Activated B cell treated with CpG ODN at 0.5 μM for 24 hours (primary cell): ENCODE measurements at regions of chr2 and their contacts with region 1.

Region 1: DNA sequence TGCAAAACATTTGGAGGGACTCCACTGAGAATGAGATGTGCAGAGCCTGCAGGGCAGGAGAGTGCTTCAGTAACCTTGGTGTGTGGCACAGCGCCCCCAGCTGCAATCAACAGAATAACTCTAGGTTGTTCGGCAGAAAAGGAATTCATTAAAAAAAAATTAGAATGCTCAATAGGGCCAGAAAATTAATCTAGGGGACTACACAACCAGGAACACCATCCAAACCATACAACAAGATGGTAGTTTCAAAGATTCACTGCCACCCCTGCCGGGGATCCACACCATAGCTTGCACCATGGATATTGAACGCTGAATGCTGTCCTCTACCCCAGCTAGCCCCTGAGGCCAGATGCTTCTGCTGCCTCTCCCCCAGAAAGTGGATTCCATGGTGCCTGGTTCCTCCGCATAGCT is 50.1 kb downstream of the THUMPD2 start:
- DNase-seq: no peak
- ATAC-seq: no peak
- H3K4me3 Mint-ChIP-seq: no peak overlapping the region
- H3K27ac Mint-ChIP-seq: no peak overlapping the region
- H3K4me1 Mint-ChIP-seq: peaks cover 11% of the 10 kb centered on the region
- H3K27me3 Mint-ChIP-seq: no peaks in the 10 kb centered on the region
- CTCF ChIP-seq: peak; percentile 58

Region 2: DNA sequence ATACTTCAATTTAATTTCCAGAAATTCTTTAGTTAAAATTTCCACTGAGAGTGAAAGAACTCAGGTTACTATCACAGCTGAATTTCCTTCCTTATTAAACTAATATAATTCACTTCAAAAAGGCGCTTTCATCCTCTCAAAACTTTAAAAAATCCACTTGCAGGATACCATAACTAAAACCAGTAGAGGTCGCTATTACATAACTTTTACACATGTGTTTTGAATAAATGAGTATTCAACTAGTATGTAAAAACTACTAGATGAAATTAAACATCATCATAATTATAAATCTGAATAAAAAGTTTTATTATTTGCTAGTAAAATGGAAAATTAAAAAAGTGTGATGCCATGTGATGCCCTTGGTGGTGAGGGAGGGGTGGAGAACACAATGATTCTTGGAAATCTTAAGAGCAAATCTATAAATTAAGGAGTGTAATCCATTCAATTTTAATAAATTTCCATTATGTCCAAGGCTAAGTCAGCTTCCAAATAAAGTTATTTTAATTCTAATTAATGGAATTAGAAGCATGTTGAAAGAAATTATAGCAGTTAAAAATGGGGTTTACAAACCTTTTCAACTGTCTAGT is 669.5 kb before region 1 on chr2:
- CTCF ChIA-PET with region 1: interaction called, 14 read pairs
- POLR2A ChIA-PET with region 1: no interaction called
- intact Hi-C with region 1: loop called (anchors 1 kb)
- DNase-seq: no peak
- ATAC-seq: no peak
- H3K4me3 Mint-ChIP-seq: no peak overlapping the region
- H3K27ac Mint-ChIP-seq: no peak overlapping the region
- H3K4me1 Mint-ChIP-seq: no peaks in the 10 kb centered on the region
- H3K27me3 Mint-ChIP-seq: no peaks in the 10 kb centered on the region
- CTCF ChIP-seq: peak; percentile 67

Region 3: GRCh38 chr2:39379643-39380524 is 349.1 kb before region 1 on chr2:
- CTCF ChIA-PET with region 1: interaction called, 120 read pairs
- POLR2A ChIA-PET with region 1: interaction called, 3 read pairs
- intact Hi-C with region 1: loop called (anchors 1 kb)
- DNase-seq: no peak
- ATAC-seq: peak; percentile 35
- H3K4me3 Mint-ChIP-seq: no peak overlapping the region
- H3K27ac Mint-ChIP-seq: no peak overlapping the region
- H3K4me1 Mint-ChIP-seq: peaks cover 30% of the 10 kb centered on the region
- H3K27me3 Mint-ChIP-seq: no peaks in the 10 kb centered on the region
- CTCF ChIP-seq: no peak

Region 4: GRCh38 chr2:39513641-39514094 is 215.3 kb before region 1 on chr2:
- CTCF ChIA-PET with region 1: interaction called, 6 read pairs
- POLR2A ChIA-PET with region 1: no interaction called
- intact Hi-C with region 1: loop called (anchors 1 kb)
- DNase-seq: no peak
- ATAC-seq: peak; percentile 57
- H3K4me3 Mint-ChIP-seq: no peak overlapping the region
- H3K27ac Mint-ChIP-seq: no peak overlapping the region
- H3K4me1 Mint-ChIP-seq: peaks cover 19% of the 10 kb centered on the region
- H3K27me3 Mint-ChIP-seq: no peaks in the 10 kb centered on the region
- CTCF ChIP-seq: no peak

Region 5: GRCh38 chr2:39871291-39871761 is 142.4 kb after region 1 on chr2:
- CTCF ChIA-PET with region 1: no interaction called
- POLR2A ChIA-PET with region 1: no interaction called
- intact Hi-C with region 1: no loop called
- DNase-seq: no peak
- ATAC-seq: no peak
- H3K4me3 Mint-ChIP-seq: no peak overlapping the region
- H3K27ac Mint-ChIP-seq: no peak overlapping the region
- H3K4me1 Mint-ChIP-seq: no peaks in the 10 kb centered on the region
- H3K27me3 Mint-ChIP-seq: no peaks in the 10 kb centered on the region
- CTCF ChIP-seq: no peak

Region 6: GRCh38 chr2:41580806-41581205 is 1851.9 kb after region 1 on chr2:
- CTCF ChIA-PET with region 1: no interaction called
- POLR2A ChIA-PET with region 1: no interaction called
- intact Hi-C with region 1: no loop called
- DNase-seq: no peak
- ATAC-seq: no peak
- H3K4me3 Mint-ChIP-seq: no peak overlapping the region
- H3K27ac Mint-ChIP-seq: no peak overlapping the region
- H3K4me1 Mint-ChIP-seq: no peaks in the 10 kb centered on the region
- H3K27me3 Mint-ChIP-seq: no peaks in the 10 kb centered on the region
- CTCF ChIP-seq: no peak